RWPE1 (cell line): ENCODE measurements at regions of chr1 and their contacts with region 1.

Region 1: GRCh38 chr1:196148367-196148970 is 459.8 kb downstream of the KCNT2 start:
- DNase-seq: peak; percentile 32
- H3K27ac ChIP-seq: no peak overlapping the region
- CTCF ChIP-seq: peak; percentile 67

Region 2: GRCh38 chr1:196063293-196063692 is 85.2 kb before region 1 on chr1:
- CTCF ChIA-PET with region 1: no interaction called
- POLR2A ChIA-PET with region 1: no interaction called
- DNase-seq: peak; percentile 57
- H3K27ac ChIP-seq: no peak overlapping the region
- CTCF ChIP-seq: no peak

Region 3: DNA sequence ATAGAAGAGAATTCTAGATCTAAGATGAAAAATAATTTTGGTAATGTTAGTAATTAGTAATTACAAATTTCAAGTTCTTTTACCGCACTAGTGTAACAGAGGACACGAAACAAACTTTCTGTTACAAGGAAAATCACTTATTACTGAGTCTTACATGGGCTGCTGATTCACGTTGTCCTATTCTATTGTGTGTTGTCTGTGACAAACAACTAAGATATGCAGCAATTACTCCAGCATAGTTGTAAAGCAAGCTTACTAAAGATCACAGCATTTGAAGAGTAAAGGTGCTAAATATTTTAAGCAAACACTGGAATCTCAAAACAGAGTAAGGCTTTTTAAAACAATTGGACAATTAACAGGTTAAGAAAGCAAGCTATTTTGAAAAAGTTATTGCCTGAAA is 42.6 kb before region 1 on chr1:
- CTCF ChIA-PET with region 1: no interaction called
- POLR2A ChIA-PET with region 1: no interaction called
- DNase-seq: peak; percentile 25
- H3K27ac ChIP-seq: no peak overlapping the region
- CTCF ChIP-seq: no peak

Region 4: DNA sequence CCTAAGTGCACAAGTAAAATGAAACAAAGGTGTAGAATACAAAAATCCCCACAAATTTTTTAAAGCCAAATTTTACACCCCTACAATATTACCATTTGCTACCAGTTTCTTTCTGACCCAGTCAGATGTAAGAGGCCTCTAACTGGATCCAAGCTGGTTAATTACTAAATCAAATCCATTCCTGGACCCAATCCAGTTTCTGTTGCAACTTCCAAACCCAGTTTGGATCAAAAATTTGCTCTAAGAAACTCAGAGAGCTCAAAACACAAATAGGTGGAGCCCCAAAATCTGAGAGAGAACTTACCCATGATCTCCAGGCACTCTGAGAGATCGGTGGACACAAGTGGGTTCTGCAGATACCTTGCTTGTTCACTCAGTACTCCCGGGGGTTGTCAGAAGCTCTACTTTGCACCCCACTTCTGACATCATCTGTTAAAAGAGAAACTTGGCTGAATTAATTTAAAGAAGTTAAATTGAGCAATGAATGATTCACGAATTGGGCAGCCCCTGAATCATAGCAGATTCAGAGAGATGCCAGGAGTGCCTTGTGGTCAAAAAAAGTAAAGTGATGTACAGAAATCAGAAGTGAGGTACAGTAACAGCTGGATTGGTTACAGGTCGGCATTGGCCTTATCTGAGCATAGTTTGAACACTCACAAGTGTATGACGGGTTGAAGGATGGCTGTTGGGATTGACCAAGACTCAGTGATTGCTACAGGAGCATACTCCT is 11.8 kb after region 1 on chr1:
- CTCF ChIA-PET with region 1: interaction called, 14 read pairs
- POLR2A ChIA-PET with region 1: no interaction called
- DNase-seq: peak; percentile 60
- H3K27ac ChIP-seq: no peak overlapping the region
- CTCF ChIP-seq: no peak

Region 5: DNA sequence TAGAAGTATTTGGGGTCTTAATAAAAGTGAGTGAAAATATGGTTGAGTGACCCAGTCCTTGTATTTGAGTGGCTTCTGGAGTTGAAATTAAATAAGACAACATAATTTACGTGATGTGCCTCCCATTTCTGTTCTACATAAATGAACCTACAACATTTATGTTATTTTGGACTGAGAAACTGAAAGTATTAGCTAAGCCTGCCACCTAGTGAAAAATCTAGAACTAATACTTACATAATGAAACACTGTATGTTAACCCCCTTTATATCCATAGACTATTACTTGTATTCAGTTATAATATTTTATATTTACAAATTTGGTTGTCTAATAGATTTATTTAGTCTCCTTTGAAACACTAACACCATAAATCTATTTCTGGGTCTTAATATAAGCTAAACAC is 160.9 kb after region 1 on chr1:
- CTCF ChIA-PET with region 1: interaction called, 66 read pairs
- POLR2A ChIA-PET with region 1: no interaction called
- DNase-seq: peak; percentile 38
- H3K27ac ChIP-seq: no peak overlapping the region
- CTCF ChIP-seq: peak; percentile 27; the same call in 1 of the 2 replicates